K562 (cell line): ENCODE measurements at regions of chr9 and their contacts with region 1.

Region 1: GRCh38 chr9:128412120-128412790 is 8.4 kb upstream of the CERCAM start:
- DNase-seq: peak; percentile 55 to 81 (median 68)
- ATAC-seq: peak; percentile 88
- H3K4me3 ChIP-seq: no peak overlapping the region
- H3K27ac ChIP-seq: no peak overlapping the region
- H3K4me1 ChIP-seq: peaks cover 9 to 23% of the 10 kb centered on the region in 2 experiments; a peak in 4 of 5 replicates
- H3K27me3 ChIP-seq: no peaks in the 10 kb centered on the region; a peak in 1 of 5 replicates
- CTCF ChIP-seq: peak; percentile 89 to 94 (median 91)
- EP300 ChIP-seq: no peak
- POLR2A ChIP-seq: no peak
- RAD21 ChIP-seq: peak; percentile 76 to 91

Region 2: DNA sequence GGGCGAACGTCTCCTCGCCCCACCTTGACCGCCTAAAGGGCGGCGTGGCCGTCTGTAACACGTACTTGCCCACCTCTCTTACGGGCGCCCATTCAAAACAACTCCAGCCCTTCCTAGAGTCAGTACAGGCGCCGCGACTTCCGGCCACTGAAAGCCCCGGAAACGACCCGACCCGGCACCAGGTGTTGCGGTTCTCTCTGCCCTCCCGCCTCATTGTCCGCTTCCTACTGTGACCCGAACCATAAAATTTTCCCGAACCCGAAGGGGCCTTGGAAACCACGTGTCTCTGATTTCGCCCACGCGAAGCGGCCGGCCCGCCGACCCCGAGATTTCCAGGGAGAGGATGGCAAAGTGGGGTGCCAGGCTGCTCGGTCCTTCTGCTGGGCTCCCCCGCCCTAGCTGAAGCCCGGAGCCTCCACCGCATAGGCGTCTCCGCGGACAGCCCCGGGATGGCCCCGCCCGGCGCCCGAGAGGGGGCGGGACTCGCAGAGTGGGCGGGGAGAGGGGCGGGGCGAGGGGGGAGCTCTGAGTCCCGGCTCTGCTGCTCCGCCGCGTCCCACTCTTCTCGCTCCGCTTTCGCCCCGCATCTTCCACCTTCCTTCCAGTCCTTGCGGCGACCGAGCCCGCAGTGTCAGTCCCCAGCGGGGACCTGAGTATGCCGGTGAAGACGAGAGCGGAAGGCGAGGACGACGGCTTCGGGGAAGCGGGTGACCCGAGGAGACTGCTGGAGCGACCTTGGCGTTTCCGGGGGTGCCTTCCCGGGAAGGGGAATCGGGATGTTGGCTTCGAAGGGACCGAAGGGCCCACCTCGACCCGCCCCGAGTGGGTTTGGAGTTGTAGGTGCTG is 284.0 kb before region 1 on chr9:
- CTCF ChIA-PET with region 1: no interaction called
- POLR2A ChIA-PET with region 1: no interaction called
- in situ Hi-C with region 1: no loop called
- intact Hi-C with region 1: loop called (anchors 5 kb)
- DNase-seq: peak; percentile 89 to 93 (median 90)
- ATAC-seq: peak; percentile 82
- H3K4me3 ChIP-seq: peak overlapping the region; percentile 98
- H3K27ac ChIP-seq: peak overlapping the region; percentile 93
- H3K4me1 ChIP-seq: peaks cover 10 to 38% of the 10 kb centered on the region in 2 experiments
- H3K27me3 ChIP-seq: no peaks in the 10 kb centered on the region
- CTCF ChIP-seq: no peak
- EP300 ChIP-seq: no peak
- POLR2A ChIP-seq: peak; percentile 71; the same call in 1 of the 2 replicates
- RAD21 ChIP-seq: no peak

Region 3: DNA sequence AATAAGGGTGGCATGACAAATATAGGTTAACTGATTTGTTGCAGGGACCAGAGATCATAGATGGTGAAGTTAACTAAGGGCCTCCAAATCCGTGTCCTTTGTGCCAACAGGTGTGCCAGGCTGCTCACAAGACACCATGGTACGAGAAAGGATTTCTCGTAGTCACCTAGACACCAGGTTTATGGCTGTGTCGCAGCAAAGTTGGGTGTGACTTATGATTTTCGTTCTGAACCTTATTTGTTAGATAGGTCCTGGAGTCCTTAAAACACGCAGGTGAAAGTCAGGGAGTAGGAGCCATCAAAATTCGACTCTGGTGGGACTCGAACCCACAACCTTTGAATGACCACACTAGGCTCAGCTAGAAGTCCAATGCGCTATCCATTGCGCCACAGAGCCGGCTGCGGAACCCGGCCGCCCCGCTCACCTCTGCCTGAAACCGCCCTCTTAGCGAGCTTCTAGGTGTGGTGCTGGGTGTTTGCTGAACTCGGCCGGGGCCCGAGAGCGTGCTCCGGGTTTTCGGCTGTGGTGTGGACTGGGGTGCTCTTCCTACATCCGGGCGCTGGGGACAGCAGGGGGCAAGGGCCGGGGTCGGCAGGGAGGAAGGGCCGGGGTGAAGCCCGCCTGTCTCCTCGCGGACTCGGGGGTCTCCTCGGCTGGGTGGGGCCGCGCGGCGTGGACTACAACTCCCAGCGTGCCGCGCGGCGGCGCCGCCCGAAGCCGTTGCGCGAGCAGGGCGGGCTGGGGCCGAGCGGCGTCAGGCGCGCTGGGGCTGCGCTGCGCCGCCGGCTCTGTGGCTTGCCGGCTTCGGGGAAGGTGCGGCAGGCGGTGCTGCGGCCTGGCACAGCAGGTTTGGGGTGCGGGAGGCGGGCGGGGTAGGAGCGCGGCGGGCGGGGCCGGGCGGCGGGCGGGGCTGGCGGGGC is 72.2 kb before region 1 on chr9 and contains the start of gene SLC27A4:
- CTCF ChIA-PET with region 1: no interaction called
- POLR2A ChIA-PET with region 1: no interaction called
- in situ Hi-C with region 1: no loop called
- intact Hi-C with region 1: no loop called
- DNase-seq: peak; percentile 94 to 97 (median 96)
- ATAC-seq: peak; percentile 94
- H3K4me3 ChIP-seq: peak within 1 kb of the TSS; percentile 52
- H3K27ac ChIP-seq: peak within 1 kb of the TSS; percentile 62
- H3K4me1 ChIP-seq: peaks cover 10 to 19% of the 10 kb centered on the region in 2 experiments; a peak in 4 of 5 replicates
- H3K27me3 ChIP-seq: no peaks in the 10 kb centered on the region
- CTCF ChIP-seq: peak in 2 of 3 experiments; percentile 3 to 10; a peak in 3 of 6 replicates
- EP300 ChIP-seq: peak; percentile 50
- POLR2A ChIP-seq: peak; percentile 79
- RAD21 ChIP-seq: peak; percentile 13 to 30; a peak in 2 of 4 replicates
- polyA plus RNA-seq, gene SLC27A4: 0.25 to 0.92 TPM

Region 4: GRCh38 chr9:128361986-128362646 is 50.1 kb before region 1 on chr9:
- CTCF ChIA-PET with region 1: interaction called, 37 read pairs
- POLR2A ChIA-PET with region 1: interaction called, 3 read pairs
- in situ Hi-C with region 1: no loop called
- intact Hi-C with region 1: loop called (anchors 1 kb)
- DNase-seq: peak; percentile 79 to 86 (median 82)
- ATAC-seq: peak; percentile 91
- H3K4me3 ChIP-seq: no peak overlapping the region
- H3K27ac ChIP-seq: no peak overlapping the region
- H3K4me1 ChIP-seq: peaks cover 15 to 48% of the 10 kb centered on the region in 2 experiments; a peak in 4 of 5 replicates
- H3K27me3 ChIP-seq: no peaks in the 10 kb centered on the region
- CTCF ChIP-seq: peak; percentile 89 to 95 (median 93)
- EP300 ChIP-seq: peak; percentile 22; the same call in 1 of the 2 replicates
- POLR2A ChIP-seq: peak; percentile 37; the same call in 1 of the 2 replicates
- RAD21 ChIP-seq: peak; percentile 88 to 92